Transverse colon (tissue), 4 donors: ENCODE measurements at regions of chr3 and their contacts with region 1.

Region 1: GRCh38 chr3:51371943-51372557 is 13.0 kb upstream of the MANF start:
- DNase-seq: peak; percentile 44
- H3K4me3 ChIP-seq: no peak overlapping the region
- H3K27ac ChIP-seq: no peak overlapping the region
- H3K4me1 ChIP-seq: no peaks in the 10 kb centered on the region
- H3K27me3 ChIP-seq: no peaks in the 10 kb centered on the region
- CTCF ChIP-seq: peak; percentile 49 to 63 (median 59)
- EP300 ChIP-seq: no peak
- POLR2A ChIP-seq: no peak

Region 2: GRCh38 chr3:50442945-50443579 is 929.0 kb before region 1 on chr3:
- in situ Hi-C with region 1: no loop called
- intact Hi-C with region 1: no loop called
- DNase-seq: peak; percentile 22
- H3K4me3 ChIP-seq: no peak overlapping the region
- H3K27ac ChIP-seq: no peak overlapping the region
- H3K4me1 ChIP-seq: no peaks in the 10 kb centered on the region
- H3K27me3 ChIP-seq: no peaks in the 10 kb centered on the region
- CTCF ChIP-seq: no peak
- EP300 ChIP-seq: no peak
- POLR2A ChIP-seq: no peak

Region 3: GRCh38 chr3:50627407-50628051 is 744.5 kb before region 1 on chr3:
- in situ Hi-C with region 1: loop called (anchors 10 to 25 kb)
- intact Hi-C with region 1: no loop called
- DNase-seq: no peak
- H3K4me3 ChIP-seq: no peak overlapping the region
- H3K27ac ChIP-seq: no peak overlapping the region
- H3K4me1 ChIP-seq: peaks cover 0 to 25% (median 16%) of the 10 kb centered on the region in 4 donors
- H3K27me3 ChIP-seq: no peaks in the 10 kb centered on the region
- CTCF ChIP-seq: no peak
- EP300 ChIP-seq: no peak
- POLR2A ChIP-seq: no peak

Region 4: DNA sequence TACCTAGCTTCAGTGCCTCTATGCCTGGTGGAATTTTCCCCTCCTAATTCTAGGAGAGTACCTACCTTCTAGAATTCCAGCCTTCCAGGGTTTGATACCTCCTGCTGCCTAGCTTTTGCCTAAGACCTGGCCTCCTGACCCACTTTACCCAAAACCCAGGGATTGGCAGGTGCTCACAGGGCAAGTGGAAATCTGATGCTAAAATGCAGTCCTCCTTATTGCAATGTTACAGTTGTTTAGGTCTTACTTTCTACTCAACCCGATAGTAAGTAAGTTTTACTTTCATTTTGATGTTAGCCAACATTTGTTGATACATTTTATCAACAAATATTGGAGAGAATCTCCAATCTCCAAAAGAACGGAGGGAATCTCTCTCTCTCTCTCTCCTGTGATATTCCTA is 421.5 kb before region 1 on chr3:
- in situ Hi-C with region 1: no loop called
- intact Hi-C with region 1: no loop called
- DNase-seq: no peak
- H3K4me3 ChIP-seq: peak overlapping the region in 1 of 4 donors; percentile 3
- H3K27ac ChIP-seq: no peak overlapping the region
- H3K4me1 ChIP-seq: no peaks in the 10 kb centered on the region
- H3K27me3 ChIP-seq: no peaks in the 10 kb centered on the region
- CTCF ChIP-seq: no peak
- EP300 ChIP-seq: no peak
- POLR2A ChIP-seq: no peak

Region 5: GRCh38 chr3:50961386-50961785 is 410.7 kb before region 1 on chr3:
- in situ Hi-C with region 1: loop called in 2 of 4 experiments (anchors 5 to 10 kb)
- intact Hi-C with region 1: no loop called
- DNase-seq: no peak
- H3K4me3 ChIP-seq: no peak overlapping the region
- H3K27ac ChIP-seq: no peak overlapping the region
- H3K4me1 ChIP-seq: no peaks in the 10 kb centered on the region
- H3K27me3 ChIP-seq: peaks cover 6% of the 10 kb centered on the region
- CTCF ChIP-seq: no peak
- EP300 ChIP-seq: no peak
- POLR2A ChIP-seq: no peak

Region 6: GRCh38 chr3:50971487-50971924 is 400.5 kb before region 1 on chr3:
- in situ Hi-C with region 1: loop called in 3 of 4 experiments (anchors 5 to 25 kb)
- intact Hi-C with region 1: no loop called
- DNase-seq: peak; percentile 34
- H3K4me3 ChIP-seq: no peak overlapping the region
- H3K27ac ChIP-seq: no peak overlapping the region
- H3K4me1 ChIP-seq: peaks cover 0 to 3% (median 0%) of the 10 kb centered on the region in 4 donors
- H3K27me3 ChIP-seq: no peaks in the 10 kb centered on the region
- CTCF ChIP-seq: peak; percentile 67 to 84 (median 77)
- EP300 ChIP-seq: no peak
- POLR2A ChIP-seq: no peak

Region 7: GRCh38 chr3:50978991-50979667 is 392.9 kb before region 1 on chr3:
- in situ Hi-C with region 1: loop called in 1 of 4 experiments (anchors 25 kb)
- intact Hi-C with region 1: no loop called
- DNase-seq: no peak
- H3K4me3 ChIP-seq: no peak overlapping the region
- H3K27ac ChIP-seq: no peak overlapping the region
- H3K4me1 ChIP-seq: no peaks in the 10 kb centered on the region
- H3K27me3 ChIP-seq: no peaks in the 10 kb centered on the region
- CTCF ChIP-seq: no peak
- EP300 ChIP-seq: no peak
- POLR2A ChIP-seq: no peak

Region 8: GRCh38 chr3:51391075-51391567 is 19.1 kb after region 1 on chr3 and contains the start of gene RBM15B:
- in situ Hi-C with region 1: no loop called
- intact Hi-C with region 1: no loop called
- DNase-seq: peak; percentile 98
- H3K4me3 ChIP-seq: peak within 1 kb of the TSS; percentile 72 to 91 (median 87)
- H3K27ac ChIP-seq: peak within 1 kb of the TSS; percentile 93 to 94 (median 94)
- H3K4me1 ChIP-seq: peaks cover 26 to 77% (median 66%) of the 10 kb centered on the region in 4 donors
- H3K27me3 ChIP-seq: no peaks in the 10 kb centered on the region
- CTCF ChIP-seq: peak in 3 of 5 experiments; percentile 82 to 94 (median 93)
- EP300 ChIP-seq: no peak
- POLR2A ChIP-seq: peak; percentile 18
- total RNA-seq, gene RBM15B: 19.1 to 69.9 (median 28.0) TPM

Region 9: DNA sequence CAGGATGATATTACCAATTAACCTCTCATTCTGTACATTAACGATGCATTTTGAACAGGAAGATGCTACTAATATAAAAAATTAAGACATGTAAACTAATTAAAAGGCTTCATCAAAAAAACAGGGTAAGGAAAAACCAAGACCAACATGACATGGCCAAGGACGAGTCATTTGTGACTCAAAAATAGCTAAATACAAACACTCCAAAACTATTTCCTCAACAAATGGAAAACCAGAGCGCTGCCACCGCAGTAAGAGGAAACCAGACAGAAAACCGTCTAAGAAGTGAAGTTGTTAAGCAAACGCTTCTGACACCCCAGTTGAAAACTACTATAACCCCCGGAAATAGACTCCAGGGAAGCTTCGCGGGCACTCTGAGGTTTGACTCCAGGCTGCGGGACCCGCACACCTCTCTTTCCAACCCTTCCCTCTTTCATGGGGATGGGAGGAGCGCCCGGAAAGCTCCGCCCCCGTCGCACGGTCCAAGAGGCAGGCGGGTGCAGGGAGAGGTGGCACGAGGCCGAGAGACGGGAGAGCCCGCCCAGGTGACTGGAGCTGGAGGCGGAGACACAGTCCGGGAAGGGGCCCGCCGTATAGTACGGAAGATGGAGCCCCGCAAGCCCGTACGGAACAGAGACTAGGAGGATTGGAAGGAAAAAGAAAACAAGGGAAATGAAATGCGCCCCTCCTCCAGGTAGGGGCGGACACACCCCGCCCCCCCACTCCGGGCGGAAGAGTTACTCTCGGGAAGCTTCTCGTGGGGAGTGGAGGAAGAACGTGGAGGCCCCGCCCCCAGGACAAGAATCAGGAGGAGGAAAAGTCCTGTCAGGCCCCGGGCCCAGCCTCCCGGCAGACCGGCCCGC is 127.1 kb after region 1 on chr3:
- in situ Hi-C with region 1: no loop called
- intact Hi-C with region 1: no loop called
- DNase-seq: peak; percentile 96
- H3K4me3 ChIP-seq: peak overlapping the region; percentile 90 to 95 (median 91)
- H3K27ac ChIP-seq: peak overlapping the region; percentile 94 to 99 (median 98)
- H3K4me1 ChIP-seq: peaks cover 0 to 20% (median 8%) of the 10 kb centered on the region in 4 donors
- H3K27me3 ChIP-seq: no peaks in the 10 kb centered on the region
- CTCF ChIP-seq: no peak
- EP300 ChIP-seq: no peak
- POLR2A ChIP-seq: peak; percentile 79